Naive thymus-derived CD4-positive, alpha-beta T cell (primary cell): ENCODE measurements at regions of chr11 and their contacts with region 1.

Region 1: GRCh38 chr11:117143871-117144476 is at the start of gene PAFAH1B2:
- DNase-seq: peak; percentile 88 to 95 (median 94)
- ATAC-seq: peak; percentile 94
- H3K4me3 ChIP-seq: peak within 1 kb of the TSS; percentile 89
- H3K4me3 Mint-ChIP-seq: peak within 1 kb of the TSS; percentile 88 to 100 (median 97)
- H3K27ac ChIP-seq: peak within 1 kb of the TSS; percentile 85
- H3K27ac Mint-ChIP-seq: peak within 1 kb of the TSS; percentile 90 to 98 (median 97)
- H3K4me1 ChIP-seq: peaks cover 6 to 10% of the 10 kb centered on the region in 2 donors
- H3K4me1 Mint-ChIP-seq: peaks cover 28 to 57% (median 44%) of the 10 kb centered on the region in 7 donors
- H3K27me3 ChIP-seq: no peaks in the 10 kb centered on the region
- H3K27me3 Mint-ChIP-seq: peaks cover 11 to 24% (median 12%) of the 10 kb centered on the region in 5 donors
- total RNA-seq, gene PAFAH1B2: 48.9 to 62.0 (median 55.8) TPM

Region 2: DNA sequence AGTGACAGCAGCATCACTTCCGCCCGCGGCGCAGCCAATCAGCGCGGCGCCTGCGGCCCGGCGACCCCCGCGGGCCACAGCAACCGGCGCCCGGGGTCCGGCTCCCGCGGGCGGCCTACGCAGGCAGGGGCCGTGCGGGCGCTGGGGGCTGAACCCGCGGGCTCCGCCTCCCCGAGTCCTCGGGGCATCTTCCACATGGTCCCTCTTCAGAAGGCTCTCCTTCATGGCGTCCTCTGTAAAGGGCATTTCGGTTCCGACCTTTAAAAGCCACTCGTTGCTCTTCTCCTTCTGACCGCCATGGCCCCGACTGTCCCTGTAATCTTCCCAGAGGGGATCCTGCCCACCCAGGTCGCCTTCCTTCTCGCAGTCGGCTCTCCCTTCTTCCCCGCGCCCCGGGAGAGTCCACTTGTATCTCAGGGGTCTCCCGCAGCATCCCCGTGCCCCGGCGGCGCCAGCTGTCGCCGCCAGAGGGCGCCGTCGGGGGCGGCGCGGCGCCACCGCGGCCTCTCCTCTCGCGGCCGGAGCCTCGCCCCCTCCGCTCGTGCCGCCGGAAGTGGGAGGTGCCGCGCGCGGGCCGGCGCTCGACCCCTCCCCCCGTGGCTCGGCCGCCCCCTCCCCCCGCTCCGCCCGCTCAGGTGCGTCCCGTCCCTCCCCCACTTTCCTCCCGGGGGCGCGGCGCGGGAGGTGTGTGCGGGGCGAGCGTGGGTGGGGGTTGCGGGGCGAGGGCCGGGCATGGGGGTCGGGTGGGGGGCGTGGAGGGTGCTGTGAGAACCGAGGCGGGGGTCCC is 88.3 kb after region 1 on chr11 and contains the start of gene RNF214:
- CTCF ChIA-PET with region 1: interaction called, 6 read pairs
- POLR2A ChIA-PET with region 1: interaction called, 19 read pairs
- intact Hi-C with region 1: loop called (anchors 1 kb)
- DNase-seq: peak; percentile 61 to 84 (median 73)
- ATAC-seq: peak; percentile 92
- H3K4me3 ChIP-seq: peak within 1 kb of the TSS; percentile 96
- H3K4me3 Mint-ChIP-seq: peak within 1 kb of the TSS; percentile 91 to 100 (median 98)
- H3K27ac ChIP-seq: peak within 1 kb of the TSS; percentile 97
- H3K27ac Mint-ChIP-seq: peak within 1 kb of the TSS; percentile 94 to 100 (median 99)
- H3K4me1 ChIP-seq: peaks cover 32 to 35% of the 10 kb centered on the region in 2 donors
- H3K4me1 Mint-ChIP-seq: peaks cover 40 to 55% (median 50%) of the 10 kb centered on the region in 7 donors
- H3K27me3 ChIP-seq: no peaks in the 10 kb centered on the region
- H3K27me3 Mint-ChIP-seq: no peaks in the 10 kb centered on the region
- total RNA-seq, gene RNF214: 16.6 to 36.0 (median 24.0) TPM

Region 3: GRCh38 chr11:117327567-117328374 is 183.8 kb after region 1 on chr11 and contains the start of gene CEP164:
- CTCF ChIA-PET with region 1: no interaction called
- POLR2A ChIA-PET with region 1: interaction called, 5 read pairs
- intact Hi-C with region 1: loop called in 1 of 2 experiments (anchors 1 kb)
- DNase-seq: peak; percentile 76 to 95 (median 93)
- ATAC-seq: peak; percentile 96
- H3K4me3 ChIP-seq: peak within 1 kb of the TSS; percentile 66
- H3K4me3 Mint-ChIP-seq: peak within 1 kb of the TSS in 8 of 10 donors; percentile 26 to 69 (median 44)
- H3K27ac ChIP-seq: peak within 1 kb of the TSS; percentile 79
- H3K27ac Mint-ChIP-seq: peak within 1 kb of the TSS in 4 of 9 donors; percentile 11 to 81 (median 68)
- H3K4me1 ChIP-seq: peaks cover 0 to 10% of the 10 kb centered on the region in 2 donors
- H3K4me1 Mint-ChIP-seq: peaks cover 0 to 19% (median 14%) of the 10 kb centered on the region in 7 donors
- H3K27me3 ChIP-seq: no peaks in the 10 kb centered on the region
- H3K27me3 Mint-ChIP-seq: peaks cover 0 to 4% (median 0%) of the 10 kb centered on the region in 5 donors
- total RNA-seq, gene CEP164: 36.6 to 47.6 (median 36.8) TPM

Region 4: GRCh38 chr11:117479372-117479771 is 335.4 kb after region 1 on chr11:
- CTCF ChIA-PET with region 1: no interaction called
- POLR2A ChIA-PET with region 1: no interaction called
- intact Hi-C with region 1: no loop called
- DNase-seq: no peak
- ATAC-seq: no peak
- H3K4me3 ChIP-seq: no peak overlapping the region
- H3K4me3 Mint-ChIP-seq: no peak overlapping the region
- H3K27ac ChIP-seq: no peak overlapping the region
- H3K27ac Mint-ChIP-seq: no peak overlapping the region
- H3K4me1 ChIP-seq: no peaks in the 10 kb centered on the region
- H3K4me1 Mint-ChIP-seq: peaks cover 0 to 3% (median 0%) of the 10 kb centered on the region in 7 donors
- H3K27me3 ChIP-seq: no peaks in the 10 kb centered on the region
- H3K27me3 Mint-ChIP-seq: peaks cover 0 to 12% (median 5%) of the 10 kb centered on the region in 5 donors

Region 5: GRCh38 chr11:118778898-118779297 is 1634.9 kb after region 1 on chr11:
- CTCF ChIA-PET with region 1: no interaction called
- POLR2A ChIA-PET with region 1: interaction called, 14 read pairs
- intact Hi-C with region 1: no loop called
- DNase-seq: no peak
- ATAC-seq: no peak
- H3K4me3 ChIP-seq: no peak overlapping the region
- H3K4me3 Mint-ChIP-seq: peak overlapping the region in 2 of 10 donors; percentile 32 to 82
- H3K27ac ChIP-seq: no peak overlapping the region
- H3K27ac Mint-ChIP-seq: peak overlapping the region in 3 of 9 donors; percentile 20 to 59 (median 31)
- H3K4me1 ChIP-seq: peaks cover 59 to 71% of the 10 kb centered on the region in 2 donors
- H3K4me1 Mint-ChIP-seq: peaks cover 42 to 95% (median 78%) of the 10 kb centered on the region in 7 donors
- H3K27me3 ChIP-seq: no peaks in the 10 kb centered on the region
- H3K27me3 Mint-ChIP-seq: no peaks in the 10 kb centered on the region